ENCODE measurements at regions of chr3 and their contacts with region 1.

Region 1: GRCh38 chr3:9396700-9397521 is 504 bp upstream of the SETD5 start:
- DNase-seq: peak; percentile 100
- H3K4me3 ChIP-seq: peak overlapping the region; percentile 70
- H3K27ac ChIP-seq: peak overlapping the region; percentile 97
- H3K4me1 ChIP-seq: peaks cover 47% of the 10 kb centered on the region
- H3K27me3 ChIP-seq: no peaks in the 10 kb centered on the region
- CTCF ChIP-seq: no peak

Region 2: GRCh38 chr3:9362731-9363530 is 34.0 kb before region 1 on chr3 and contains the start of gene THUMPD3:
- CTCF ChIA-PET with region 1: no interaction called
- POLR2A ChIA-PET with region 1: interaction called, 5 read pairs
- intact Hi-C with region 1: loop called (anchors 2 kb)
- DNase-seq: peak; percentile 96
- H3K4me3 ChIP-seq: peak within 1 kb of the TSS; percentile 68
- H3K27ac ChIP-seq: peak within 1 kb of the TSS; percentile 85
- H3K4me1 ChIP-seq: peaks cover 11% of the 10 kb centered on the region
- H3K27me3 ChIP-seq: no peaks in the 10 kb centered on the region
- CTCF ChIP-seq: no peak
- total RNA-seq, gene THUMPD3: 79.2 and 84.6 TPM in 2 replicates

Region 3: DNA sequence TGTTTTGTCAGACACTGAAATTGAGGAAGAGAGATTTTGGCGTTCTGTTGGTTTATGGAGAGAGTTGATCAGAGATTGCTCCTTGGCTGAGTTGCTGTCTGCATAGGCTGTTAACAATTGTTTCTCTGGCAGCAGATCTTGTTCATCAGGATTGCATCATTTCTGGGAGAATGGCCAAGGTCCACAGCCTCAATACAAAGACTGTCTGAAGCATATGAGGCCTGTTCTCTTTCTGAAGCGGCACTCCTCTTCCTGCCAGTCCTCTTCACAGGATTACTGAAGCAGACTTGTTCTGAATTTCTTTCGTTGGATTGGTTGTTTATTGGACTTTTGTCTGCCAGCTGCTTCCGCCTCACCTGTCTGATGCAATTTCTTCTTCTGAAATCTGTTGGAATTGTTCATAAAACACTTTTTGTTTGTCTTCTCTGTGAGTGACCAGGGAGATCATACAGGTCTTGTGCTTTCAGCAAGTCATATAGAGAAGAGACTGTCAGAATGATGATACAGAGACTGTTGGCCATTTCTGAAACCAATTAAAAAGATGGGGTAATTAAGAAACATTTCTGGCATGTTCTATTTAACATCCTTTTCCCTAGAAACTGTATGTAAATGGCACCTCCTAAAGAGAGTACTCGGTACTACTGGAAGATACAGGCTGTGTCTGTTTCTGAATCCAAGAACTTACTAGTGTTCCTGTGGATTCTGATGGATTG is 26.0 kb after region 1 on chr3:
- CTCF ChIA-PET with region 1: interaction called, 3 read pairs
- POLR2A ChIA-PET with region 1: interaction called, 4 read pairs
- intact Hi-C with region 1: loop called (anchors 2 kb)
- DNase-seq: peak; percentile 96
- H3K4me3 ChIP-seq: peak overlapping the region; percentile 16
- H3K27ac ChIP-seq: peak overlapping the region; percentile 93
- H3K4me1 ChIP-seq: peaks cover 56% of the 10 kb centered on the region
- H3K27me3 ChIP-seq: no peaks in the 10 kb centered on the region
- CTCF ChIP-seq: peak; percentile 63

Region 4: GRCh38 chr3:9732080-9732739 is 335.3 kb after region 1 on chr3:
- CTCF ChIA-PET with region 1: no interaction called
- POLR2A ChIA-PET with region 1: no interaction called
- intact Hi-C with region 1: no loop called
- DNase-seq: no peak
- H3K4me3 ChIP-seq: peak overlapping the region; percentile 100
- H3K27ac ChIP-seq: peak overlapping the region; percentile 99
- H3K4me1 ChIP-seq: peaks cover 12% of the 10 kb centered on the region
- H3K27me3 ChIP-seq: no peaks in the 10 kb centered on the region
- CTCF ChIP-seq: no peak

Region 5: DNA sequence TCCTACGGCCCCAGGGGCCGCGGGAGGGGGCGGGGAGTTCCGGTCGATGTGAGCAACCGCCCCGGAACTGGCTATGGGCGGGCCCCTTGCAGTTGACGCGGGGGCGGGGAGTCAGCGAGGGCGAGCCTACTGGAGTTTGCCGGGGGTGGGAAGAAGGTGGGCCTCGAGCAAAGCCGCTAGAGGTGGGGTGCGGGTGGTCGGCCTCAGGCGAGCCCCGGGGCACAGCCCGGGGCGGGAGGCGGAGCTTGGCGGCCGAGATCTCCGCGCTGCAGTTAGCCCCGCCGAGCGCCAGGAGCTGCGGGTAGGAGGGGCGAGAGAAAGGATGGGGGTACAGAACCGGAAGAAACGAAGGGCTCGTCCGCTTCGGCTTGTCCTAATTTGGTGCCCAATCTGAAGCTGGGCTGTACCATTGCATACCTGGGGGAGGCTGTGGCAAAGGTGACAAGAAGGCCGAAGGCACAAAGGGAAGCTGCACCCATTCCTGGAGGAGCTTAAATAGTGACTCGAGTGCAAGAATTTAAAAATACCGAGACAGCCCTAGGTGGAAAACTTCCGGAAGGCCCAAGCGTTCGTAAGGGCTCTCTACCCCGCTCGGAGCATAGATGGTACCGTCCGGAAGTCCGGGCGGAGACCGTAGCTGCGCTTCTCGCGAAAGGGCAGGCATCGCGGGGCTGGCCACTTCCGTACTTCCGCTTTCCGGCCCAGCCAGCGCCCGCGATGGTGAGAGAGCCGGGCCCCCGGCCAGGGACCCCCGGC is 395.7 kb after region 1 on chr3 and contains the starts of genes ARPC4 and TADA3:
- CTCF ChIA-PET with region 1: no interaction called
- POLR2A ChIA-PET with region 1: no interaction called
- intact Hi-C with region 1: loop called (anchors 2 kb)
- DNase-seq: peak; percentile 97
- H3K4me3 ChIP-seq: peak within 1 kb of the TSS; percentile 99
- H3K27ac ChIP-seq: peak within 1 kb of the TSS; percentile 99
- H3K4me1 ChIP-seq: peaks cover 17% of the 10 kb centered on the region
- H3K27me3 ChIP-seq: no peaks in the 10 kb centered on the region
- CTCF ChIP-seq: no peak
- total RNA-seq, gene ARPC4: 128 and 152 TPM in 2 replicates
- total RNA-seq, gene TADA3: 46.1 and 49.6 TPM in 2 replicates